ENCODE measurements at regions of chr10 and their contacts with region 1.

Region 1: DNA sequence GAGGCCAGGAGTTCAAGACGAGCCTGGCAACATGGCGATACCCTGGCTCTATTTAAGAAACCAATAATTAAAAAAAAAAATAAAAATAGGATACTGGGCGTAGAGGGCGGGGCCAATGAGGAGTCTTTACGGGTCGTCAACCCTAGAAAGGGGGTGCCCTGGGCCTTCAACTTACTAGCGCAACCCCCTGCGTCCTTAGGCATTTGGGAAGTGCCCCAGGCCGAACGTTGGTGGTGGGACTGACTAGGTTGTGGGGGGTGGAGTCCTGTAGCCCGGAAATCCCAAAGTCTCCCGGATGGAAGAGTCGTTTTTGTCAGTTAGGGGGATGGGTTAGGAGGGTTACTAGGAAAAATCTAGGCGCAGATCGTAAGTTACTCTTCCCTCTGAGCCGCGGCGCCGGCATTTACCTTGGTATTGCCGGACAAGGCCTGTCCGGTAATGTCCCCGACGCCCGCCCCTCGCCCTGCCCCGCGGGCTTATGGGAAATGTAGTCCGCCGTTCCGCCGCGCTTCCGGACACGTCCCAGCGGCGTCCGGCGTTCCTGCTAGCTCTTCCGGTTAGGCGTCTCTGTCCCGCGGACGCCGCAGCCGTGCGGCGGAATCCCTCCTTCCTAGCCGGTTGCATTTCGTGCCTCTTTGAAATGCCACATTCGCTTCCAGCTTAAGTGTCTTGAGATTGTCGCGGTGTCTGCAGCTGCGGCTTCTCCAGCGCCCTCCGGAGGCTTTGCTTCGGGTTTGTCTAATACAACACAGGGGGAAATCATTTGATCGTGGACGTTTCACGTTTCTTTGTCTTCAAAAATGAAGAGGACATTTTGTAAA is 1.3 kb upstream of the ACBD5 start:
- DNase-seq: peak; percentile 93 to 96
- ATAC-seq: peak; percentile 91 to 92 (median 92)
- H3K4me3 ChIP-seq: peak overlapping the region; percentile 88
- H3K27ac ChIP-seq: peak overlapping the region; percentile 99
- H3K4me1 ChIP-seq: peaks cover 26% of the 10 kb centered on the region
- H3K27me3 ChIP-seq: no peaks in the 10 kb centered on the region
- CTCF ChIP-seq: peak; percentile 27

Region 2: GRCh38 chr10:27153845-27154193 is 88.0 kb before region 1 on chr10:
- intact Hi-C with region 1: loop called (anchors 1 to 5 kb)
- DNase-seq: no peak
- ATAC-seq: peak in 3 of 4 donors; percentile 1 to 15 (median 3)
- H3K4me3 ChIP-seq: peak overlapping the region; percentile 86
- H3K27ac ChIP-seq: peak overlapping the region; percentile 99
- H3K4me1 ChIP-seq: peaks cover 15% of the 10 kb centered on the region
- H3K27me3 ChIP-seq: no peaks in the 10 kb centered on the region
- CTCF ChIP-seq: no peak

Region 3: GRCh38 chr10:27504007-27504807 is 262.3 kb after region 1 on chr10 and contains the start of gene RAB18:
- intact Hi-C with region 1: loop called (anchors 10 kb)
- DNase-seq: peak; percentile 98 to 99
- ATAC-seq: peak; percentile 97 to 99 (median 98)
- H3K4me3 ChIP-seq: peak within 1 kb of the TSS; percentile 82
- H3K27ac ChIP-seq: peak within 1 kb of the TSS; percentile 91
- H3K4me1 ChIP-seq: peaks cover 32% of the 10 kb centered on the region
- H3K27me3 ChIP-seq: no peaks in the 10 kb centered on the region
- CTCF ChIP-seq: peak; percentile 12
- total RNA-seq, gene RAB18: 87.0 to 125 (median 102) TPM